Panc1 (cell line): ENCODE measurements at regions of chr7 and their contacts with region 1.

Region 1: DNA sequence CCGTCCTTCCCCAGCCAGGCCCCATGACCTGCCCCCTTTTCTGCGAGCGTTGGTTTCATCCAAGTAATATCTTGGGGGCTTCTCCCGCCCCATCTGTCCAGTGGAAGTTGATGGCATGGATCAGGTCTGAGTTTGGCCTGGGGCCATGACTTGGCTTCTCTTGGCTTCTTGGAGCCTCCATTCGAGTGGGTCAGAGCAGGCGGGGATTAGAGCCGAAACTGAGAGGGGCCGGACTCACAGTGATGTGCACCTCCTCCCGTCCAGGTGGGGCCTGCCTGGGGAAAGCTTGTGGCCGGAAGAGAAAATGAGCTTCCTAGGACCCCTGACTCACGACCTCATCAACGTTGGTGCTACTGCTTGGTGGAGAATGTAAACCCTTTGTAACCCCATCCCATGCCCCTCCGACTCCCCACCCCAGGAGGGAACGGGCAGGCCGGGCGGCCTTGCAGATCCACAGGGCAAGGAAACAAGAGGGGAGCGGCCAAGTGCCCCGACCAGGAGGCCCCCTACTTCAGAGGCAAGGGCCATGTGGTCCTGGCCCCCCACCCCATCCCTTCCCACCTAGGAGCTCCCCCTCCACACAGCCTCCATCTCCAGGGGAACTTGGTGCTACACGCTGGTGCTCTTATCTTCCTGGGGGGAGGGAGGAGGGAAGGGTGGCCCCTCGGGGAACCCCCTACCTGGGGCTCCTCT is 15.1 kb upstream of the LIMK1 start:
- DNase-seq: no peak
- ATAC-seq: no peak
- H3K4me3 ChIP-seq: no peak overlapping the region
- H3K27ac ChIP-seq: no peak overlapping the region
- H3K4me1 ChIP-seq: no peaks in the 10 kb centered on the region
- H3K27me3 ChIP-seq: no peaks in the 10 kb centered on the region
- CTCF ChIP-seq: no peak

Region 2: GRCh38 chr7:74173866-74174605 is 105.5 kb after region 1 on chr7 and contains the start of gene EIF4H:
- CTCF ChIA-PET with region 1: no interaction called
- POLR2A ChIA-PET with region 1: no interaction called
- in situ Hi-C with region 1: no loop called
- intact Hi-C with region 1: loop called (anchors 10 kb)
- DNase-seq: peak; percentile 79
- ATAC-seq: peak; percentile 97
- H3K4me3 ChIP-seq: peak within 1 kb of the TSS; percentile 93 to 99
- H3K27ac ChIP-seq: peak within 1 kb of the TSS; percentile 98
- H3K4me1 ChIP-seq: peaks cover 31% of the 10 kb centered on the region
- H3K27me3 ChIP-seq: no peaks in the 10 kb centered on the region
- CTCF ChIP-seq: no peak
- total RNA-seq, gene EIF4H: 318 TPM

Region 3: DNA sequence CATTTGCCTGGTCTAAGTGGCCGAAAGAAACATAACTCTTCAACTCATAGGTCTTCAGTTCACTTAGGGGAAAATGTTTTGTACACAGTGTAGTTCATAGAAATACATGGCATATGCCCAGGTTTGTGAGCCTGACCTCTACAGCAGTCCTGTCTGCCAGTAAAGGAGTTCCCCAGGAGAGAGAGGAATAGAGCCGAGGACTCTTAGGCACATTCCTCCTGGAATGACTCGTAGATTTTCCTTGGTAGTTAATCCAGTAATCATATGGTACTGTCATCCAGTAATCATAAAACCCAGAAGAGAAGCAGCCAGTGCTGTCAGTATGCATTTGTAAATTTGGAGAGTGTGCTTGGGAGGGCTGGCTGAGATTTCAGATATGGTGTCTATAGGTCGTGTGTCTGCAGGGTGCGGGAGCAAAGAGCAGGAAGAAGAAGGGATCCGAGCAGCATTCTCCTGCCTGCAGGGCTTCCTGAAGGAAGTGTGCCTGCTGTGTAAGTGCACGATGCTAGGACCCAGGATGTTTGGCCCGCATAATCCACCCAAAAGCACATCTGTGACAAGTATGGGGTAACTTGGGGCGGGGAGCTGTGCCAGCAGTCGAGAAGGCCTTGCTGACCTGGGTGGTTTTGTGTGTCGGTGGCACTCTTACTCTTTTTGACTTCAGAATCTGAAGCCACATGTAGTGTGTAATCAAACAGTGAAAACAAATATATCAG is 119.5 kb after region 1 on chr7:
- CTCF ChIA-PET with region 1: interaction called, 10 read pairs
- POLR2A ChIA-PET with region 1: interaction called, 4 read pairs
- in situ Hi-C with region 1: no loop called
- intact Hi-C with region 1: no loop called
- DNase-seq: no peak
- ATAC-seq: peak; percentile 39; the same call in 1 of the 2 replicates
- H3K4me3 ChIP-seq: no peak overlapping the region
- H3K27ac ChIP-seq: no peak overlapping the region
- H3K4me1 ChIP-seq: peaks cover 17% of the 10 kb centered on the region
- H3K27me3 ChIP-seq: no peaks in the 10 kb centered on the region
- CTCF ChIP-seq: no peak

Region 4: DNA sequence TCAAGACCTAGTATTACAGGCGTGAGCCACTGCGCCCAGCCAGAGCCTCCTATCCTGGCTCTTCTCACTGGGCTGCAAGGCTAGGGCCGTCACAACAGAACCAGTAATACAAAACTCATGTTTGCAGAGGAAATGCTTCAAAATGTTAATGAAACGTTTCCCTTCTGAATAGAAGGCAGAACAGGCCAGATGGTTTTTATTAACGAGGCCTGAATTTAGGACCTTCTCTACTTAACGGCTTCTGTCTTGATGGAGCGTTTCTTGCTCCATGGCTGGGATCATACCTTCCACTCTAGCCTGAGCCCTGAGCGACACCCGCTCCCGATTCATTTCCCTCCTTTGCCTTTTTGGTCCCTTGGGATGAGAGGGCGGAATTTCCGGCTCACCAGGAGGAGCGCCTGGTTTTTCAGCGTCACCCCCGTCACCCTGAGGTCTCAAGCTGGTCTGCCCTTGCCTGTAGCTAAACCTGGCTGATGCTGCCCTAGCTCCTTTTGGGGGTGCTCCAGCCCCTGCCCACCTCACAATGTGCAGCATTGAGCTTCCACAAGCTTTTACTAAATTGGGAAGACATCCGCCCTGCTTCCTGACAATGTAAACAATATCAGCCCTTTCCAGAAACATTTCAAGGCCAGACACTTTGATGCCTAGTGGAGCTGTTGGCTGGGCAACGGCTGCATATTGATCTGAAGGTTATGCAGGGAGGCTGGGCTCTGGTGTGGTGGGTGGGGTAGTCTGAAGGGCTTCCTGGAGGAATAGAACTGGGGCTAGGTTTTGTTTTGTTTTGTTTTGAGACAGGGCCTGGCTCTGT is 225.9 kb after region 1 on chr7:
- CTCF ChIA-PET with region 1: interaction called, 15 read pairs
- POLR2A ChIA-PET with region 1: no interaction called
- in situ Hi-C with region 1: no loop called
- intact Hi-C with region 1: no loop called
- DNase-seq: no peak
- ATAC-seq: no peak
- H3K4me3 ChIP-seq: no peak overlapping the region
- H3K27ac ChIP-seq: 0 out of 2 replicates have a peak overlapping the region, but pooled peaks have one; percentile 9
- H3K4me1 ChIP-seq: peaks cover 31% of the 10 kb centered on the region
- H3K27me3 ChIP-seq: no peaks in the 10 kb centered on the region
- CTCF ChIP-seq: no peak

Region 5: GRCh38 chr7:74514131-74514591 is 445.6 kb after region 1 on chr7:
- CTCF ChIA-PET with region 1: no interaction called
- POLR2A ChIA-PET with region 1: no interaction called
- in situ Hi-C with region 1: no loop called
- intact Hi-C with region 1: no loop called
- DNase-seq: no peak
- ATAC-seq: no peak
- H3K4me3 ChIP-seq: no peak overlapping the region
- H3K27ac ChIP-seq: no peak overlapping the region
- H3K4me1 ChIP-seq: no peaks in the 10 kb centered on the region
- H3K27me3 ChIP-seq: no peaks in the 10 kb centered on the region
- CTCF ChIP-seq: no peak